Right cardiac atrium (tissue), 5 donors: ENCODE measurements at regions of chr2 and their contacts with region 1.

Region 1: DNA sequence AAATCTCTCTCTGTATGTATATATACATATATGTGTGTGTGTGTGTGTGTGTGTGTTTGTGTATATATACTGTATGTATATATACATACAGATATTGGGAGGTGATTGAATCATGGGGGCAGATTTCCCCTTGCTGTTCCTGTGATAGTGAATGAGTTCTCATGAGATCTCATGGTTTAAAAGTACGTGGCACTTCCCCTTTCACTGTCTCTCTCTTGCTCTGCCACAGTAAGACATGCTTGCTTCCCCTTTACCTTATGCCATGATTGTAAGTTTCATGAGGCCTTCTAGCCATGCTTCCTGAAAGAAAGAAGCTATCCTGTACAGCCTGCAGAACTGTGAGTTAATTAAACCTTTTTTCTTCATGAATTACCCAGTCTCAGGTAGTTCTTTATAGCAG is 18.8 kb upstream of the CCDC195 start:
- DNase-seq: no peak
- ATAC-seq: no peak
- H3K4me3 ChIP-seq: no peak overlapping the region
- H3K27ac ChIP-seq: no peak overlapping the region
- H3K4me1 ChIP-seq: no peaks in the 10 kb centered on the region
- H3K27me3 ChIP-seq: no peaks in the 10 kb centered on the region

Region 2: DNA sequence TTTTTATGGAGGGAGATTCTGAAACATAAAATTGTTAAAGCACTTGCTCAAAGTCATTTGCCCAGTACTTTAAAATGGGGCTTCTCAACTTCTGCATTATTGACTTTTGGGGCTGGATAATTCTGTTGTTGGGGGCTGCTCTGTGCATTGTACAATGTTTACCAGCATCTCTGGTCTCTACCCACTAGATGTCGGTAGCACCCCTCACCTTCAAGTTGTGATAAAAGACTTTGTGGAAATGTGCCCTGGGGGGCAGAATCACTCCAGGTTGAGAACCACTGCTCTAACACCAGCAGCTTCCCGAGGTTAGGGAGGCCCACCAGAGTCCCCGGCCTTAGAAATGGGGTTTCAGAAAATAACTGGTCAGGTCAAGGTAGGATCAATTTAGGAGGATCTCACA is 123.0 kb before region 1 on chr2:
- intact Hi-C with region 1: no loop called
- DNase-seq: no peak
- ATAC-seq: no peak
- H3K4me3 ChIP-seq: no peak overlapping the region
- H3K27ac ChIP-seq: no peak overlapping the region
- H3K4me1 ChIP-seq: no peaks in the 10 kb centered on the region
- H3K27me3 ChIP-seq: no peaks in the 10 kb centered on the region

Region 3: GRCh38 chr2:224909885-224910573 is 175.1 kb after region 1 on chr2:
- intact Hi-C with region 1: loop called in 1 of 4 experiments (anchors 5 kb)
- DNase-seq: peak; percentile 57 to 85 (median 72)
- ATAC-seq: peak; percentile 89
- H3K4me3 ChIP-seq: no peak overlapping the region
- H3K27ac ChIP-seq: no peak overlapping the region
- H3K4me1 ChIP-seq: no peaks in the 10 kb centered on the region
- H3K27me3 ChIP-seq: no peaks in the 10 kb centered on the region